Dendritic cell treated with granulocyte-macrophage colony-stimulating factor and Interleukin-4, amounts not matched to agents 40 ng/mL and 50 ng/mL, for 4 days (primary cell): ENCODE measurements at regions of chr2 and their contacts with region 1.

Region 1: DNA sequence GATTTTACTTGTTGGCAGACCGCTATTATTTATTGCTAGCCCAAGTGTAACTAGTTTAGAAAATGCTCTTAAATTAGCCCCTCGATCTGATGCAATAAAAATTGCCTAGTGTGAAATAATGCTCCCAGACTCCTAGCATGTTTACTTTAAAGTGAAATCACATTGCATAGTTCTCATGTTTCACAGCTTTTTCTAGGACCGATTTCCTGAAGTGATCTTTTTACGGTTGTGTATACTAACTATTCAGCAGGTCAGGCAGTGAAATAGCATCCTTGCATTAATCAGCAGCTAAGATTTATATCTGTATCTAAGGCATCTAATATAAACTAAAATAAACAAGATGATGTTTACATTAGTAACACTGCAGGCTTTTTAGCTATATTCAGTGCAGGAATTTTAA is 52.4 kb downstream of the PMS1 start:
- H3K4me3 Mint-ChIP-seq: no peak overlapping the region
- H3K27ac Mint-ChIP-seq: peak overlapping the region; percentile 86
- H3K4me1 Mint-ChIP-seq: peaks cover 28% of the 10 kb centered on the region
- H3K27me3 Mint-ChIP-seq: no peaks in the 10 kb centered on the region

Region 2: GRCh38 chr2:189874586-189875320 is 38.1 kb after region 1 on chr2:
- intact Hi-C with region 1: loop called (anchors 5 kb)
- H3K4me3 Mint-ChIP-seq: no peak overlapping the region
- H3K27ac Mint-ChIP-seq: peak overlapping the region; percentile 36
- H3K4me1 Mint-ChIP-seq: peaks cover 42% of the 10 kb centered on the region
- H3K27me3 Mint-ChIP-seq: peaks cover 3% of the 10 kb centered on the region